ENCODE measurements at regions of chr1 and their contacts with region 1.

Region 1: DNA sequence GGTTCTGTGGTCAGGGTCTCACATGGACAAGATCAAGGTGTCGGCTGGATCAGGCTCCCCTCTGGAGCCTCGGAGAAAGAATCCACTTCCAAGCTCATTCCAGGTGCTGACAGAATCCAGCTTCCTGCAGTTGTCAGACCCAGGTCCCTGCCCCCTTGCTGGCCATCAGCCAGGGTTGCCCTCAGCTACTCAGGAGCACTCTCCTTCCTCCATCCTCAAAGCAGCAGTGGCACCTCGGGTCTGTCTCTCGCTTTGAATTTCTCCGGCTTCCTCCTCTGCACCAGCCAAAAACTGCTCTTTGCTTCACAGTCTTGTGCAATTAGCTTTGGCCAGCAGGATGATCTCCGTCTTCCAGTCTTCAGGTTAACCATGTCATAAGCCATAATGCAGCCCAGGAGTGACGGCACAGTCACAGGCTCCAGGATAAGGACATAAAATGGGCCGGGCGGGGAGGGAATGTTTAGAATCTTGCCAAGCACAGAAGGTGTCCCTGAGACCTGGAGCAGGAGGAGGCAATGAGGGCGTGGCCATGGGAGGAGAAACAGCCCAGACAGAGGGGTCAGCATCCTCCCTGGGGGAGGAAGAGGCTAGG is 79.4 kb upstream of the SLC25A33 start:
- DNase-seq: peak in 1 of 2 donors; percentile 46
- H3K4me3 ChIP-seq: no peak overlapping the region
- H3K27ac ChIP-seq: peak overlapping the region in 1 of 2 donors; percentile 42
- H3K4me1 ChIP-seq: peaks cover 0 to 4% of the 10 kb centered on the region in 2 donors
- H3K27me3 ChIP-seq: no peaks in the 10 kb centered on the region
- CTCF ChIP-seq: no peak
- POLR2A ChIP-seq: no peak

Region 2: GRCh38 chr1:9486466-9487140 is 26.7 kb after region 1 on chr1:
- intact Hi-C with region 1: loop called (anchors 1 kb)
- DNase-seq: no peak
- H3K4me3 ChIP-seq: no peak overlapping the region
- H3K27ac ChIP-seq: no peak overlapping the region
- H3K4me1 ChIP-seq: no peaks in the 10 kb centered on the region
- H3K27me3 ChIP-seq: no peaks in the 10 kb centered on the region
- CTCF ChIP-seq: no peak
- POLR2A ChIP-seq: no peak

Region 3: DNA sequence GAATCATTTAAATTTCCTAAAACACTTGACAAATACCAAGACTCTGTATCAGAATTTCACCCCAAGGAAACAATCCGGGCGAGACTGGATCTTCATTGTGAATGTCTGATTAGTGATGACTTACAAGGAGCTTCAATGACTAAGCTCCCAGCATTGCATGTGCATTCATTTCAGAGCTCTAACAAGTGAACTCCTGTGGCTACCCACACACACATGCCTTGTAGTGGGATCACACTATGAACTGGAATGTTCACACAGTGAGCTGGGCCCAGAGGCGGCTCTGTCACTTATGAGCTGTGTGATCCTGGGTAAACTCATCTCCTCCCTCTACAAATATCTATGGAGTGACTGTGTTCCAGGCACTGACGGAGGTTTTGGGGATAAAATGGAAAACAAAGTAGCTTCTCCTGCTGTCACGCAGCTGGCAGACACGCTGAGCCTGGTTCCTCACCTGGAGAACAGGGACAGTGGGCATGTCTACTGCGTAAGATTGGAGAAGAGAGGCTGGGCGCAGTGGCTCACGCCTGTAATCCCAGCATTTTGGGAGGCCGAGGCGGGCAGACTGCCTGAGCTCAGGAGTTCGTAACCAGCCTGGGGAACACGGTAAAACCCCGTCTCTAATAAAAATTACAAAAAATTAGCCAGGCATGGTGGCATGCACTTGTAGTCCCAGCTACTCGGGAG is 307.0 kb after region 1 on chr1:
- intact Hi-C with region 1: no loop called
- DNase-seq: no peak
- H3K4me3 ChIP-seq: no peak overlapping the region
- H3K27ac ChIP-seq: no peak overlapping the region
- H3K4me1 ChIP-seq: no peaks in the 10 kb centered on the region
- H3K27me3 ChIP-seq: no peaks in the 10 kb centered on the region
- CTCF ChIP-seq: no peak
- POLR2A ChIP-seq: no peak

Region 4: GRCh38 chr1:10108134-10108663 is 648.3 kb after region 1 on chr1:
- intact Hi-C with region 1: no loop called
- DNase-seq: no peak
- H3K4me3 ChIP-seq: no peak overlapping the region
- H3K27ac ChIP-seq: peak overlapping the region; percentile 54 to 73
- H3K4me1 ChIP-seq: no peaks in the 10 kb centered on the region
- H3K27me3 ChIP-seq: no peaks in the 10 kb centered on the region
- CTCF ChIP-seq: no peak
- POLR2A ChIP-seq: no peak

Measured in breast epithelium (tissue), 4 donors.